ENCODE measurements at regions of chr19 and their contacts with region 1.

Region 1: DNA sequence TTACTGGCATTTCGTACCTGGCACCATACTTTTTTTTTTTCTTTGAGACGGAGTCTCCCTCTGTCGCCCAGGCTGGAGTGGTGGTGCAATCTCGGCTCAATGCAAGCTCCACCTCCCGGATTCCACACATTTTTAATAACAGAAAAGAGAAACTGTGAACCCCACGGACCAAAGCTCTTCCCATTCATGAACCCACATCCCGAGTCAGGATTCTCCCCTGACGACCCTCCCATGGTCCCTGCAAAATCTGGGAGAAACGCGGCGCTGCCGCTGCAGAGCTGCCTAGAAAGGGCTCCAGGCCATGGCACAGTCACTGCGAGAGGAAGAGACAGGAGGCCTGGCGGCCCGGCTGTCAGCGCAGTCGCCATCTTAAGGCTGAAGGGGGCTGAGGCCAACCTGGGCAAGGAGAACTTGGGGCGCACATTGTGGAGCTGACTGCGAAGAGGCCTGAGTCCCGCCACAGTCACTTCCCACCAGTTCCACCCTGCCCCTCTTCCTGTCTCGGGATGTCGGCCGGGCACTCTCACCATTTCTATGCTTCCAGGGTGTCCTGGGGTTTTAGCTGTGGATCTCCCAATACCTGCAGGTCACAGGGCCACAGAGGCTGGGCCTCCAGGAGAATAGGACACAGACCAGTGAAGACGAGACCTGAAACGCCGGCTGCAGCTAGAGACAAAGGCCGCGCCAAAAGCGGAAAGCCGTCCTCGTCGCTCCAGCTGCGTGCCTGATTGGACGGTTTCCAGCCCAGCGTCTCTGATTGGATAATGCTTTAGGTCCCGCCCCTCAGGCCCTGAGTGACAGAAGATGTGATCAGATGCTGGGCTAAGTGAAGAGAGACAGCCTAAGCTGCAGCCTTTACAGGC is 71.0 kb downstream of the ZNF486 start:
- DNase-seq: peak; percentile 97
- ATAC-seq: peak; percentile 98
- H3K4me3 Mint-ChIP-seq: peak overlapping the region; percentile 99
- H3K27ac Mint-ChIP-seq: peak overlapping the region; percentile 96
- H3K4me1 Mint-ChIP-seq: peaks cover 14% of the 10 kb centered on the region
- H3K27me3 Mint-ChIP-seq: no peaks in the 10 kb centered on the region
- CTCF ChIP-seq: no peak

Region 2: GRCh38 chr19:19997656-19998268 is 240.2 kb before region 1 on chr19:
- CTCF ChIA-PET with region 1: interaction called, 14 read pairs
- POLR2A ChIA-PET with region 1: interaction called, 5 read pairs
- intact Hi-C with region 1: no loop called
- DNase-seq: peak; percentile 70
- ATAC-seq: no peak
- H3K4me3 Mint-ChIP-seq: no peak overlapping the region
- H3K27ac Mint-ChIP-seq: no peak overlapping the region
- H3K4me1 Mint-ChIP-seq: no peaks in the 10 kb centered on the region
- H3K27me3 Mint-ChIP-seq: no peaks in the 10 kb centered on the region
- CTCF ChIP-seq: peak; percentile 91

Region 3: DNA sequence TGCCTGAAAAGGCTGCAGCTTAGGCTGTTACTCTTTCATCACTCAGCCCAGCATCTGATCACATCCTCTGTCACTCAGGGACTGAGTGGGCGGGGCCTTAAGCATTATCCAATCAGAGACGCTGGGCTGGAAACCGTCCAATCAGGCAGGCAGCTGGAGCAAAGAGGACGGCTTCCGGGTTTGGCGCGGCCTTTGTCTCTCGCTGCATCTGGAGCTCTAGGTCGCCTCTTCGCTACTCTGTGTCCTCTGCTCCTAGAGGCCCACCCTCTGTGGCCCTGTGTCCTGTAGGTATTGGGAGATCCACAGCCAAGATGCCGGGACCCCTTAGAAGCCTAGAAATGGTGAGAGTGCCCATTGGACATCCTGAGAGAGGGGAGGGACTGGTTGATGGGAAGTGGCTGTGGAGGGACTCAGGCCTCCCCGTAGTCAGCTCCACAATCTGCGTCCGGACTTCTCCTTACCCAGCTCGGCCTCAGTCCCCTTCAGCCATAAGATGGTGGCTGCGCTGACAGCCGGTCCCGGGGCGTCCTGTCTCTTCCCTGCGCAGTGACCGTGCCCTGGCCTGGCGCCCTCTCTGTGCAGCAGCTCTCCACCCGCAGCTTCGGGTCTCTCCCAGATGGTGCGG is 70.9 kb before region 1 on chr19 and contains the start of gene ZNF486:
- CTCF ChIA-PET with region 1: interaction called, 3 read pairs
- POLR2A ChIA-PET with region 1: interaction called, 13 read pairs
- intact Hi-C with region 1: no loop called
- DNase-seq: peak; percentile 99
- ATAC-seq: peak; percentile 97
- H3K4me3 Mint-ChIP-seq: peak within 1 kb of the TSS; percentile 99
- H3K27ac Mint-ChIP-seq: peak within 1 kb of the TSS; percentile 96
- H3K4me1 Mint-ChIP-seq: peaks cover 36% of the 10 kb centered on the region
- H3K27me3 Mint-ChIP-seq: no peaks in the 10 kb centered on the region
- CTCF ChIP-seq: no peak
- total RNA-seq, gene ZNF486: 13.1 to 15.5 TPM

Measured in activated CD8-positive, alpha-beta T cell treated with anti-CD3 and anti-CD28 coated beads for 36 hours (primary cell).